Dorsolateral prefrontal cortex (tissue), 120 donors: ENCODE measurements at regions of chr1 and their contacts with region 1.

Region 1: DNA sequence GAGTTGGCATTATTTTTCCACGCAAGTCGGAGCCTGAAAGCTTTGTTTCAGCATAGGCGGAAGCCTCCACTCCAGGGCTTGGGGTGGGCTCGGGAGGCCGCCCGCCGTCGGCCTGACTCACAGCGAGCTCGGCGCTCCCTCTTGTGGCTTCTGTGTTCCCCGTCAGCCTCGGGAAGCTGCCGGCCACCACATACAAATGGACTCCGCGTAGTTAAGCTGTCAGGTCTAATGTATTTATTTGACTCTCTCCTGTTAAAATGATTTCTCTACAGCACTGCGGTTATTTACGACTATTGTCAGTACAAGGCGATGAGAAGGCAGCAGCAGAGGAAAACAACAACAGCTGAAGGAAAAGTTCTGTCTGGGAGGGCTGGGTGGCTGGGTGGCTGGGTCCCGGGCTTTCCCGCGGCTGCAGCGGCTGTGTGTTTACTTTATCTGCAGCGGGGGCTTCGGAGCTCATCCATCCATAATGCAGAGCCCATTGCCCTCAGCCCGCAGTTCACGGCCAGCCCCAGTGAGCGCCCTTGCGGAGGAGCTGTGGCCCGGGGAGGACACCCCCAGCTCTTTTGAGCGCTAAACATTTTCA is 375.7 kb upstream of the CAMK1G start:
- DNase-seq: peak; percentile 58 to 83 (median 80)
- H3K4me3 ChIP-seq: peak overlapping the region in 58 of 59 donors; percentile 29 to 68 (median 52)
- H3K27ac ChIP-seq: peak overlapping the region in 49 of 59 donors; percentile 12 to 83 (median 55)
- H3K27me3 ChIP-seq: peaks cover 0 to 22% (median 0%) of the 10 kb centered on the region in 45 donors
- CTCF ChIP-seq: peak in 55 of 56 donors; percentile 23 to 85 (median 74)

Region 2: DNA sequence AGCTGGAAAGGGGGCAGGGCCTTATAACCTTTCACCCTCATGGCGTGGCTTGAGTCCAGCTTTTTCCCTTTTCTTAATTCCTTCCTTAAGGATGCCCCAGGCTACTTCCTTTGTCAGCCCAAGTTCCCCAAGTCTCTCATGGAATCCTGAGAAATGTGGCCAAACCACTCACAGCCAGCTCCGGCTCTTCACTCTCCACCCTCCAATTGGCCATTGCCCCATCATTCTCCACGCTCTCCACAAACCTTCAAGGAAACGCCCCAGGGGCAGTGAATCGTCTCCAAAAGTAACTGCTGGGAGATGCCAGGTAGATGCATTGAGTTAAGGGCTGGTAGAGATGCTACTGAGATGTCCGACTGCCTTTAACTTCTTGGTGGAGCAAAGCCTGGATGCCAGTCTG is 1183.4 kb before region 1 on chr1:
- intact Hi-C with region 1: loop called in 1 of 2 experiments (anchors 5 kb)
- DNase-seq: no peak
- H3K4me3 ChIP-seq: no peak overlapping the region
- H3K27ac ChIP-seq: peak overlapping the region in 18 of 59 donors; percentile 10 to 75 (median 36)
- H3K27me3 ChIP-seq: peaks cover 0 to 6% (median 0%) of the 10 kb centered on the region in 45 donors
- CTCF ChIP-seq: no peak

Region 3: GRCh38 chr1:208652296-208653160 is 555.3 kb before region 1 on chr1:
- intact Hi-C with region 1: loop called in 1 of 2 experiments (anchors 2 kb)
- DNase-seq: peak in 8 of 10 donors; percentile 33 to 71 (median 61)
- H3K4me3 ChIP-seq: peak overlapping the region in 1 of 59 donors; percentile 22
- H3K27ac ChIP-seq: no peak overlapping the region
- H3K27me3 ChIP-seq: peaks cover 0 to 35% (median 0%) of the 10 kb centered on the region in 45 donors
- CTCF ChIP-seq: peak; percentile 77 to 93 (median 87)

Region 4: DNA sequence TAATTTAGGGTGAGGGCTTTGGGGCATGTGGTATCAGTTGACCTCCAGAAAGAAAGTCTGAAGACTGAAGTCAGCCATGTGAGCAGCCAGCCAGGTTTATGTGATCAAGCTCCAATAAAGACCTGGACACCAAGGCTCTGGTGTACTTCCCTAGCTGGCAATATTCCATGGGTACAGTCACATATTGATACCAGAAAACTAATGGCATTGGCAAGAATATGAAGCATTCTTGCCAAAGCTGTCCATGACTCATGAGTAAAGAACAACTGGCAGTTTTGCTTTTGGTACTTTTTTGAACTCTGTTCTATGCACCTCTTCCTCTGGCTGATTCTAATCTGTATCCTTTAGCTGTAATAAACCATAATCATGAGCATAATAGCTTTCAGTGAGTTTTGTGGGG is 39.6 kb before region 1 on chr1:
- intact Hi-C with region 1: no loop called
- DNase-seq: no peak
- H3K4me3 ChIP-seq: no peak overlapping the region
- H3K27ac ChIP-seq: no peak overlapping the region
- H3K27me3 ChIP-seq: no peaks in the 10 kb centered on the region
- CTCF ChIP-seq: no peak

Region 5: DNA sequence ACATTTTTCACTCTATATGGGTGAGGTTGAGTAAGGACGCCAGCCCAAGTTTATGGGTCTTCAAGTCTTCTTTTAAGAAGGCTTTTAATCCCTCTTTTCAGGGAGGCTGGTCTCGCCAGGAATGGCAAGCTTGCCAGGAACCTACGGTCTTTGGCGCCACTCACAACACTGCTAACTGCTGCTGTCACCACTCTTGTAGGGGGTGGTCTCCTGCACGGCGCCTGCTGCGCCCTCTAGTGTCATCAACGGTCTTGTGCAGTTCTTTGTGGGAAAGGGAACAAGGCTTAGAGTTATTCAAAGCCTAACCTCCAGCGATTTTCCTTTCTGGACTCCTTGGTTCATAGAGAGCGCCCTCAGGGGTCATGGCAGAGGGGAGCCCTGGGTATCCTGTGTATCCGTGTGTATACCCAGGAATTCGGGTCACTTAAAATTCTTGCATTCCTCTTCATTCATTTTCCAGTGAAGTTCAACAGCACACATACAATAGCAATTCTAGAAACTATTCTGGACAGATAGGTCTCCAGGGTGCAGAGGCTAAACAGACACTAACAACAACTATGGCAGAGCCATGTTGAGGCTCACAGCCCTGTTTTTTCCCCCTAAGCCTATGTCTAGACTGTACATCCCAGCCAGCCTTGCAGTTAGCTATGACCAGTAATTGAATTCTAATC is 17.1 kb before region 1 on chr1:
- intact Hi-C with region 1: no loop called
- DNase-seq: peak in 5 of 10 donors; percentile 34 to 67 (median 47)
- H3K4me3 ChIP-seq: no peak overlapping the region
- H3K27ac ChIP-seq: no peak overlapping the region
- H3K27me3 ChIP-seq: peaks cover 0 to 8% (median 0%) of the 10 kb centered on the region in 45 donors
- CTCF ChIP-seq: peak in 55 of 56 donors; percentile 29 to 73 (median 58)

Region 6: DNA sequence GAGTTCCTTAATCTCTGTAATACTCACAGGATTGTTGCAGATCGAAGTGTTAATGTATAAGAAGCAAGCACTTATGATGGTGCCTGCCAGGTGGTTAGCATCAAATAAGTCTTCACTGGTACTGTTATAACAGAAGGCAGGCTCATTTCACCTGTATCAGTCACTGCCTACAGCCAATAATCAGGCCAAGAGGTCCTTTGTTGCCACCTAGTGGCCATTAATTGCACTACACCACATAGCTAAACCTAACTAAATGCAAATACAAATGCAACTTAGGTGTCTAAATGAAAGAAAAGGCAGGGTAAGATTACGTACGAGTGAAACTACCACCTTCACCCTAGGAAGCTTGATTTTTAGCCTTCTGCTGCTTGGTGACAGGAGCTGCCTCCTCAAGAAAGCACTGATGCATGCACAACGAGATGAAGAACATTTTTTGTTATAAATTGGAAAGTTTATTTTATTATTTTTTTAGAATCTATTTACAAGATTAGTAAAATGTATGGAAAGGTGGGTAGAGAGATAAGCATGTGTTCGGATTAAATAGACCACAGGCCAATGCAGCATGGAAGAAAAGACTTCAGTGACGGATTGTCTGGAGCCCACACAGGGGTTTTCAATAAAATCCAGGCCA is 41.0 kb after region 1 on chr1:
- intact Hi-C with region 1: loop called in 1 of 2 experiments (anchors 5 kb)
- DNase-seq: peak in 4 of 10 donors; percentile 36 to 60 (median 51)
- H3K4me3 ChIP-seq: no peak overlapping the region
- H3K27ac ChIP-seq: no peak overlapping the region
- H3K27me3 ChIP-seq: peaks cover 0 to 16% (median 0%) of the 10 kb centered on the region in 45 donors
- CTCF ChIP-seq: peak; percentile 79 to 98 (median 90)

Region 7: GRCh38 chr1:209435654-209436566 is 228.1 kb after region 1 on chr1:
- intact Hi-C with region 1: loop called in 1 of 2 experiments (anchors 10 kb)
- DNase-seq: peak; percentile 59 to 87 (median 78)
- H3K4me3 ChIP-seq: no peak overlapping the region
- H3K27ac ChIP-seq: peak overlapping the region in 39 of 59 donors; percentile 1 to 75 (median 53)
- H3K27me3 ChIP-seq: no peaks in the 10 kb centered on the region
- CTCF ChIP-seq: peak; percentile 50 to 78 (median 68)

Region 8: GRCh38 chr1:209565759-209566678 is 358.2 kb after region 1 on chr1:
- intact Hi-C with region 1: loop called (anchors 5 to 10 kb)
- DNase-seq: peak; percentile 53 to 94 (median 82)
- H3K4me3 ChIP-seq: no peak overlapping the region
- H3K27ac ChIP-seq: no peak overlapping the region
- H3K27me3 ChIP-seq: peaks cover 0 to 5% (median 0%) of the 10 kb centered on the region in 45 donors
- CTCF ChIP-seq: peak; percentile 42 to 95 (median 87)